Activated naive CD8-positive, alpha-beta T cell treated with anti-CD3 and anti-CD28 coated beads, Interleukin-2, amount 10 ng/mL, durations not matched to agents 7 days and 5 days (primary cell): ENCODE measurements at regions of chr11 and their contacts with region 1.

Region 1: DNA sequence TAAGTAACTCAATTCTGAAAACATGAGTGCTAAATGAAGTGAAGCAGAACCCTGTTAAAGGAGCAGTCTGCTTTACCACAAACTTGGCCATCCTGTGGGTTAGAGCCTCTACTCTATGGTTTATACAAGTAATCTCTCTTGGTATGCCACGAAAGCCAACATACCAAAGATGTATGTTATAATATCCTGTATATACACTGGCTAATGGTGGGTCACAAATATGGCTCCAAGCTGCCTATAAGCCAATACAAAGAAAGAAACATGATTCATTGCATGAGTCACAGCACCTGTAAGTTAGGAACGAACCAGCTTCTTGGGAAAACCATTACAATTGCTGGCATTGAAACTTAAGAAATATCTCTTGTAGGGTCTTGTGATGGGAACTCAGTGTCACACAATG is 16.1 kb downstream of the XRRA1 start:
- DNase-seq: no peak
- ATAC-seq: peak; percentile 69
- H3K4me3 Mint-ChIP-seq: peak overlapping the region; percentile 7
- H3K27ac Mint-ChIP-seq: peak overlapping the region; percentile 71
- H3K4me1 Mint-ChIP-seq: peaks cover 21% of the 10 kb centered on the region
- H3K27me3 Mint-ChIP-seq: no peaks in the 10 kb centered on the region

Region 2: DNA sequence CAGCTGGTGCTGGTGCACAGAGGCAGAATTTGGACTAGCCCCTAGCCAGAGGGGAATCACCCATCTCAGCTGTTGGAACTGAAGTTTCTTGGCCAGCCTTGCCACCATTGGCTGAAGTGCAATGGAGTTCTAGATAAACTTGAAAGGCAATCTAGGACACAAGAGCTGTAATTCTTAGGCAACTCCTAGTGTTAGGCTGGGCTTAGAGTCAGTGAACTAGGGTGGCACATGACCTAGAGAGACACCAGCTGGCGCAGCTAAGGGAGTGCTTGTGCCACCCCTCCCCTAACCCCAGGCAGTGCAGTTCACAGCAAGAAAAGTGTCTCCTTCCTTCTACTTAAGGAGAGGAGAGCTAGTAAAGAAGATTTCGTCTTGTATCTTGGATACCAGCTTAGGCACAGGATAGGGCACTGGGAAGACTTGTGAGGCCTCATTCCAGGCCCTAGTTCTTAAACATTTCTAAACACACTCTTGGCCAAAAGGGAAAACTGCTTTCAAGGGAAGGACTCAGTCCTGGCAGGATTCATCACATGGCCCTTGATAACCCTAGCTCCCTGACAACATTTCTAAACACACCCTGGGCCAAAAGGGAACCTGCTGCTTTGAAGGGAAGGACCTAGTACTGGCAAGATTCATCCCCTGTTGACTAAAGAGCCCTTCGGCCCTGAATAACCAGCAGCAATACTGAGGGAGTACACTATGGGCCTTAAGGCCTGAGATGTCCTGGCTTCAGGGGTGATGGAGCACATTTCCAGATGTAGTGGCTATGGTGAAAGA is 37.3 kb before region 1 on chr11:
- POLR2A ChIA-PET with region 1: no interaction called
- DNase-seq: no peak
- ATAC-seq: no peak
- H3K4me3 Mint-ChIP-seq: no peak overlapping the region
- H3K27ac Mint-ChIP-seq: no peak overlapping the region
- H3K4me1 Mint-ChIP-seq: no peaks in the 10 kb centered on the region
- H3K27me3 Mint-ChIP-seq: no peaks in the 10 kb centered on the region

Region 3: GRCh38 chr11:74948898-74949747 is 16.3 kb after region 1 on chr11 and contains the starts of genes SPCS2 and XRRA1:
- POLR2A ChIA-PET with region 1: interaction called, 15 read pairs
- DNase-seq: peak; percentile 95
- ATAC-seq: peak; percentile 99
- H3K4me3 Mint-ChIP-seq: peak within 1 kb of the TSS; percentile 93
- H3K27ac Mint-ChIP-seq: peak within 1 kb of the TSS; percentile 91
- H3K4me1 Mint-ChIP-seq: peaks cover 33% of the 10 kb centered on the region
- H3K27me3 Mint-ChIP-seq: no peaks in the 10 kb centered on the region
- total RNA-seq, gene SPCS2: 112 to 114 TPM
- total RNA-seq, gene XRRA1: 36.0 to 42.9 TPM